ENCODE measurements at regions of chr11 and their contacts with region 1.

Region 1: GRCh38 chr11:9573052-9573774 is at the start of gene WEE1:
- DNase-seq: peak; percentile 99
- H3K4me3 ChIP-seq: peak within 1 kb of the TSS; percentile 99
- H3K27ac ChIP-seq: peak within 1 kb of the TSS; percentile 78
- H3K4me1 ChIP-seq: peaks cover 54% of the 10 kb centered on the region
- CTCF ChIP-seq: no peak
- total RNA-seq, gene WEE1: 141 and 147 TPM in 2 replicates

Region 2: GRCh38 chr11:9460322-9461067 is 112.7 kb before region 1 on chr11 and contains the start of gene ZNF143:
- CTCF ChIA-PET with region 1: no interaction called
- POLR2A ChIA-PET with region 1: interaction called, 4 read pairs
- intact Hi-C with region 1: loop called (anchors 2 kb)
- DNase-seq: peak; percentile 100
- H3K4me3 ChIP-seq: peak within 1 kb of the TSS; percentile 97
- H3K27ac ChIP-seq: peak within 1 kb of the TSS; percentile 97
- H3K4me1 ChIP-seq: peaks cover 28% of the 10 kb centered on the region
- CTCF ChIP-seq: no peak
- total RNA-seq, gene ZNF143: 25.0 and 36.2 TPM in 2 replicates

Region 3: GRCh38 chr11:9534791-9535781 is 38.1 kb before region 1 on chr11:
- CTCF ChIA-PET with region 1: interaction called, 3 read pairs
- POLR2A ChIA-PET with region 1: interaction called, 3 read pairs
- intact Hi-C with region 1: loop called (anchors 5 kb)
- DNase-seq: peak; percentile 81
- H3K4me3 ChIP-seq: no peak overlapping the region
- H3K27ac ChIP-seq: no peak overlapping the region
- H3K4me1 ChIP-seq: peaks cover 12% of the 10 kb centered on the region
- CTCF ChIP-seq: peak; percentile 100

Region 4: DNA sequence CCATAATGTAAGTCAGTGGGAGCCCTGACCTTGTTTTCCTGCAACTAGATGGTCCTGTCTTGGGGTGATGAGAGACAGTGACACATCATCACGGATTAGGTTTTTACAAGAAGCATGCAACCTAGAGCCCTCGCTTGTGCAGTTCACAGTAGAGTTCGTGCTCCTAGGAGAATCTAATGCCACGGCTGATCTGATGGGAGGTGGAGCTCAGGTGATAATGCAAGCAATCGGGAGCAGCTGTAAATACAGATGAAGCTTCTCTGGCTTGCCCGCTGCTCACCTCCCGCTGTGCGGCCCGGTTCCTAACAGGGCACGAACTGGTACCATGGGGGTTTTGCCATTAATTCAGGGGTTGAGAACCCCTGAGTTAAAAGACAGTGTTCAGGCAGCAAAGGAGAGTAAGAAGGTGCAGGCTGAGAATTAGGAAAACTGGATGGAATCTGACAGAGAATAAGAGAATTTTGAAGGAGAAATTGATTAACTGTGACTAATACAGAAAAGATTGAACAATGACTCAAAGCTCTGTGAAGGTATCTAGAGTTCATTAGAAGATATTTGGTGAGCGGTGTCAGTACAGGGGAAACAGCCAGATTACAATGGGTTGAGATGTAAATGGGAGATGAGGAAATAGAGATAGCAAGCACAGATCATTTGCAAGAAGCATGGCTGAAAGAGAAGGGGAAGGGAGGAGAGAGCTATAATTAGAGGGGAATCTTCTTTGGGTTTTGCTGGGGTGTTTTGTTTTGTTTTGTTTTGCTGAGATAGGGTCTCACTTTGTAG is 21.2 kb after region 1 on chr11:
- CTCF ChIA-PET with region 1: interaction called, 4 read pairs
- POLR2A ChIA-PET with region 1: interaction called, 509 read pairs
- intact Hi-C with region 1: loop called (anchors 1 kb)
- DNase-seq: peak; percentile 46
- H3K4me3 ChIP-seq: peak overlapping the region; percentile 61
- H3K27ac ChIP-seq: peak overlapping the region; percentile 95
- H3K4me1 ChIP-seq: peaks cover 71% of the 10 kb centered on the region
- CTCF ChIP-seq: no peak

Region 5: GRCh38 chr11:9601037-9601875 is 28.0 kb after region 1 on chr11:
- CTCF ChIA-PET with region 1: interaction called, 10 read pairs
- POLR2A ChIA-PET with region 1: interaction called, 509 read pairs
- intact Hi-C with region 1: loop called (anchors 1 kb)
- DNase-seq: peak; percentile 95
- H3K4me3 ChIP-seq: peak overlapping the region; percentile 74
- H3K27ac ChIP-seq: peak overlapping the region; percentile 99
- H3K4me1 ChIP-seq: peaks cover 96% of the 10 kb centered on the region
- CTCF ChIP-seq: no peak

Region 6: GRCh38 chr11:9663699-9664275 is 90.6 kb after region 1 on chr11 and contains the start of gene SWAP70:
- CTCF ChIA-PET with region 1: no interaction called
- POLR2A ChIA-PET with region 1: interaction called, 6 read pairs
- intact Hi-C with region 1: loop called (anchors 5 kb)
- DNase-seq: peak; percentile 90
- H3K4me3 ChIP-seq: peak within 1 kb of the TSS; percentile 82
- H3K27ac ChIP-seq: peak within 1 kb of the TSS; percentile 76
- H3K4me1 ChIP-seq: peaks cover 36% of the 10 kb centered on the region
- CTCF ChIP-seq: no peak
- total RNA-seq, gene SWAP70: 37.5 and 44.4 TPM in 2 replicates

Measured in OCI-LY7 (cell line).